PC-9 (cell line): ENCODE measurements at regions of chr12 and their contacts with region 1.

Region 1: DNA sequence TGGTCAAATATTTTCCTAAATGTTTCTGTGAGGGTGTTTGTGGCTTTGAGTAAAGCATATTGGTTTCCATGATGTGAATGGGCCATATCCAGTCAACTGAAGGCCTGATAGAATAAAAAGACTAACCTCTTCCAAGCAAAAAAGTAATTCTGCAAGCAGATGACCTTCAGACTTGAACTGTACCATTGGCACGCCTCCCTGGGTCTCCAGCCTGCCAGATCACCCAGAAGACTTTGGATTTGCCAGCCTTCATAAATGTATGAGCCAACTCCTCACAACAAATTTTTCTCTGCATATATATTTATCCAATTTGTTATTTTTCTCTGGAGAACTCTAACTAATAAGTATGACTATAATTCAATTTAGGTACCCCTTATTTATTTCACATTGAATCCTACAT is 190.3 kb downstream of the KIF21A start:
- DNase-seq: no peak
- H3K4me3 ChIP-seq: no peak overlapping the region
- H3K27ac ChIP-seq: no peak overlapping the region
- H3K4me1 ChIP-seq: no peaks in the 10 kb centered on the region
- H3K27me3 ChIP-seq: no peaks in the 10 kb centered on the region
- CTCF ChIP-seq: no peak

Region 2: GRCh38 chr12:39122562-39123204 is 129.9 kb before region 1 on chr12:
- CTCF ChIA-PET with region 1: no interaction called
- POLR2A ChIA-PET with region 1: no interaction called
- intact Hi-C with region 1: loop called (anchors 5 kb)
- DNase-seq: no peak
- H3K4me3 ChIP-seq: no peak overlapping the region
- H3K27ac ChIP-seq: no peak overlapping the region
- H3K4me1 ChIP-seq: peaks cover 8% of the 10 kb centered on the region; the same call in 1 of the 2 replicates
- H3K27me3 ChIP-seq: no peaks in the 10 kb centered on the region
- CTCF ChIP-seq: no peak